A673 (cell line): ENCODE measurements at regions of chr1 and their contacts with region 1.

Region 1: GRCh38 chr1:212503714-212504113 is 71.0 kb downstream of the NENF start:
- DNase-seq: no peak
- H3K4me3 ChIP-seq: no peak overlapping the region
- H3K27ac ChIP-seq: no peak overlapping the region
- H3K4me1 ChIP-seq: no peaks in the 10 kb centered on the region
- H3K27me3 ChIP-seq: no peaks in the 10 kb centered on the region
- CTCF ChIP-seq: no peak

Region 2: GRCh38 chr1:212124690-212125582 is 378.8 kb before region 1 on chr1:
- CTCF ChIA-PET with region 1: no interaction called
- POLR2A ChIA-PET with region 1: no interaction called
- intact Hi-C with region 1: no loop called
- DNase-seq: no peak
- H3K4me3 ChIP-seq: no peak overlapping the region
- H3K27ac ChIP-seq: no peak overlapping the region
- H3K4me1 ChIP-seq: no peaks in the 10 kb centered on the region
- H3K27me3 ChIP-seq: no peaks in the 10 kb centered on the region
- CTCF ChIP-seq: no peak

Region 3: DNA sequence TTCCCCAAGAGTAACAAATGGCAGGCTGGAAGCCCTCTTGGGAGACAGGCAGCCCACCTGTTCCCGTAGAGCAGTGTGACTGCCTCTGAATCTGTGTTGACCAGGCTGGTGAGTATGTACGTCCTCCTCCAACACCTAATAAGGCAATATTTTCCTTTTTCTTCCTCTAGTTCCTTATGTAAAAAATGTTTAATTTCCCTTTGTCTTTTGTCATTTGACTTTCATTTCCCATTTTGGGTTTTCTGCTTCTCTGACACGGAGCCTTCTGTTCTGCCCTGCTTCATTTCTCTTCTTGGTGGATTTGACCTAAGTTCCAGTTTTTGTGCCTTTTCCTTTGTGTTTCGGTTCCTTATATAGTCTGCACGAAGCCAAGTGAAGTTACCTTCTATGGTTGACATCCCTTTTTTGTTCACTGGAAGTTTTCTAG is 39.1 kb after region 1 on chr1:
- CTCF ChIA-PET with region 1: interaction called, 10 read pairs
- POLR2A ChIA-PET with region 1: no interaction called
- intact Hi-C with region 1: no loop called
- DNase-seq: no peak
- H3K4me3 ChIP-seq: no peak overlapping the region
- H3K27ac ChIP-seq: no peak overlapping the region
- H3K4me1 ChIP-seq: no peaks in the 10 kb centered on the region
- H3K27me3 ChIP-seq: no peaks in the 10 kb centered on the region
- CTCF ChIP-seq: no peak